A673 (cell line): ENCODE measurements at regions of chr17 and their contacts with region 1.

Region 1: DNA sequence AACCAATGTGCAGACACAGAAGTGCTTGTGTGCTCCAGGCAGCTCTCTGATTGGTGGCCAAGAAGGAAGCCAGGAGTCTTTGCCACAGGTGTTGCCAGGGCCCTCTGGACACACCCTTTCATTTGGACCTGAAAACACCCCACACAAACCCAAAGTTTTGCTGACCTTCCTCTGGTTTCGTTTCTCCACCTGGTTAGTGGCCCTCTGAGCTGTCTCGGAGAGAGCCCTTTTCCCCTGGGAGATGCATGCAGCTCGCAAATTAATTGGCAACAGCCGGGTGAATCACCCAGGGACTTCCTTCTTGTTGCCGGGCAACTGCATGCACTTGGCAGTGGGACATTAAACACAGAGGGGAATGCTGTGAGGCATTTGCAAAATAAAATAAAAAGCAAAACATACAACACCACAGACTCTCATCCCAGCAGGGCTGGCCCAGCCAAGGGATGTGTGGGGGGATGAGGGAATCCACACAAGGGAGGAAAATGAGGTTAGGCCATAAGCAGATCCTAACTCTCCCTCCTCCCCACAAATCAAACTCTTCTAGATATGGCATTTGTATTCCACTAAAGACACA is 286.6 kb downstream of the SOX9 start:
- DNase-seq: peak; percentile 98
- H3K4me3 ChIP-seq: no peak overlapping the region
- H3K27ac ChIP-seq: peak overlapping the region; percentile 88
- H3K4me1 ChIP-seq: peaks cover 73% of the 10 kb centered on the region
- H3K27me3 ChIP-seq: no peaks in the 10 kb centered on the region
- CTCF ChIP-seq: no peak

Region 2: DNA sequence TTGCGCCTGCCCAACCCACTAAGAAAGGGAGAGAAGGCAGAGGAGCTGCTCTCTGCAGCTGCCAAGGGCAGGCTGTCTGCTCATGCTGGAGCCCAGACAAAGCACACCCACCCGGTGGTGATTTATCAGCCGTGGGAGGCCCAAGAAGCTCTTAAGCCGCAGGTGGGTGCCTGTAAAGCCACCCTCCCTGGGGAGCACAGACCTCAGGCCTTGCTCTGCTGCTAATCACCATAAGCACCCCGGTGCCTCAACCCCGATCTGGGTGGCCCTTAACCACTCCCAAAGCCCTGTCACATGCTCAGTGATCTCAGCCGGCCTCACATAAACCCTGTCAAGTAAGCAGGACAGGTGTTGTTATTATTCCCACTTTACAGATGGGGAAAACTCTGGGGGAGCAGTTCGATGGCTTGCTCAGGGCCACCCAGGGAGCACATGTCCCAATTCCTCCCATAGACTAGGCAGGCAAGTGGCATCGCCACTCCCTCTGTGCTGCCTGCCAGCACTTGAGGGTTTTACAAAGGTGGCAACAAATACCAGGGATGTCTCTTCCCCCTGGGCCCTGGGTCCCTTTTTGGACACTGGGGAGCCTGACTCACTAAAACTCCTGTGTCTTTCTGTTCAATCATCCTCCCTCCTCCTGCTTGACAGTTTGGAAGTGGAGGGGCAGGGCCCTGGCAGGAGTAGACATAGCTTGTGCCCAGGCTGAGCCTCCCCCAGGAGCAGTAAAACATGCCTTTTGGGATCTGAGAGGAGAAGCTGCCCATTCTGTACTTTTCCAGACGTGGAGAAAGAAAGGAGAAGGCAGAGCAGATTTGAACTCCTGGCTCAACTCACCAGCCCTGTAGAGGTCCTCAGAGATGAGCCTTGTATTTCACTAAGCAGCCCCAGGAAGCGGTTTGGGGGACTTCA is 12.7 kb after region 1 on chr17:
- CTCF ChIA-PET with region 1: no interaction called
- POLR2A ChIA-PET with region 1: no interaction called
- intact Hi-C with region 1: loop called (anchors 1 kb)
- DNase-seq: peak; percentile 77
- H3K4me3 ChIP-seq: no peak overlapping the region
- H3K27ac ChIP-seq: peak overlapping the region; percentile 26
- H3K4me1 ChIP-seq: peaks cover 44% of the 10 kb centered on the region
- H3K27me3 ChIP-seq: no peaks in the 10 kb centered on the region
- CTCF ChIP-seq: no peak